ENCODE measurements at regions of chr9 and their contacts with region 1.

Region 1: GRCh38 chr9:82148901-82149461 is 160.4 kb downstream of the SPATA31D1 start:
- DNase-seq: no peak
- ATAC-seq: no peak
- H3K4me3 ChIP-seq: no peak overlapping the region
- H3K4me3 Mint-ChIP-seq: no peak overlapping the region
- H3K27ac ChIP-seq: no peak overlapping the region
- H3K27ac Mint-ChIP-seq: no peak overlapping the region
- H3K4me1 ChIP-seq: no peaks in the 10 kb centered on the region
- H3K4me1 Mint-ChIP-seq: no peaks in the 10 kb centered on the region
- H3K27me3 ChIP-seq: no peaks in the 10 kb centered on the region
- H3K27me3 Mint-ChIP-seq: no peaks in the 10 kb centered on the region

Region 2: GRCh38 chr9:81861644-81862043 is 287.3 kb before region 1 on chr9:
- CTCF ChIA-PET with region 1: no interaction called
- POLR2A ChIA-PET with region 1: interaction called in 1 of 2 experiments, 12 read pairs
- DNase-seq: no peak
- ATAC-seq: no peak
- H3K4me3 ChIP-seq: no peak overlapping the region
- H3K4me3 Mint-ChIP-seq: no peak overlapping the region
- H3K27ac ChIP-seq: no peak overlapping the region
- H3K27ac Mint-ChIP-seq: no peak overlapping the region
- H3K4me1 ChIP-seq: no peaks in the 10 kb centered on the region
- H3K4me1 Mint-ChIP-seq: no peaks in the 10 kb centered on the region
- H3K27me3 ChIP-seq: no peaks in the 10 kb centered on the region
- H3K27me3 Mint-ChIP-seq: no peaks in the 10 kb centered on the region